Activated CD8-positive, alpha-beta T cell treated with anti-CD3 and anti-CD28 coated beads, Interleukin-2, amount 10 ng/mL, durations not matched to agents 7 days and 5 days (primary cell): ENCODE measurements at regions of chr2 and their contacts with region 1.

Region 1: GRCh38 chr2:181715033-181715630 is 34.8 kb upstream of the NEUROD1 start:
- DNase-seq: peak; percentile 85
- ATAC-seq: peak; percentile 85
- H3K4me3 Mint-ChIP-seq: no peak overlapping the region
- H3K27ac Mint-ChIP-seq: no peak overlapping the region
- H3K4me1 Mint-ChIP-seq: no peaks in the 10 kb centered on the region
- H3K27me3 Mint-ChIP-seq: peaks cover 2% of the 10 kb centered on the region

Region 2: GRCh38 chr2:181077128-181077709 is 637.9 kb before region 1 on chr2:
- CTCF ChIA-PET with region 1: interaction called, 18 read pairs
- POLR2A ChIA-PET with region 1: no interaction called
- DNase-seq: peak; percentile 55
- ATAC-seq: peak; percentile 91
- H3K4me3 Mint-ChIP-seq: no peak overlapping the region
- H3K27ac Mint-ChIP-seq: no peak overlapping the region
- H3K4me1 Mint-ChIP-seq: no peaks in the 10 kb centered on the region
- H3K27me3 Mint-ChIP-seq: peaks cover 3% of the 10 kb centered on the region

Region 3: GRCh38 chr2:181085734-181086133 is 629.4 kb before region 1 on chr2:
- CTCF ChIA-PET with region 1: interaction called, 11 read pairs
- POLR2A ChIA-PET with region 1: no interaction called
- DNase-seq: no peak
- ATAC-seq: no peak
- H3K4me3 Mint-ChIP-seq: no peak overlapping the region
- H3K27ac Mint-ChIP-seq: no peak overlapping the region
- H3K4me1 Mint-ChIP-seq: no peaks in the 10 kb centered on the region
- H3K27me3 Mint-ChIP-seq: peaks cover 3% of the 10 kb centered on the region

Region 4: GRCh38 chr2:181563101-181563692 is 151.9 kb before region 1 on chr2:
- CTCF ChIA-PET with region 1: interaction called, 13 read pairs
- POLR2A ChIA-PET with region 1: no interaction called
- DNase-seq: no peak
- ATAC-seq: no peak
- H3K4me3 Mint-ChIP-seq: no peak overlapping the region
- H3K27ac Mint-ChIP-seq: no peak overlapping the region
- H3K4me1 Mint-ChIP-seq: no peaks in the 10 kb centered on the region
- H3K27me3 Mint-ChIP-seq: no peaks in the 10 kb centered on the region

Region 5: DNA sequence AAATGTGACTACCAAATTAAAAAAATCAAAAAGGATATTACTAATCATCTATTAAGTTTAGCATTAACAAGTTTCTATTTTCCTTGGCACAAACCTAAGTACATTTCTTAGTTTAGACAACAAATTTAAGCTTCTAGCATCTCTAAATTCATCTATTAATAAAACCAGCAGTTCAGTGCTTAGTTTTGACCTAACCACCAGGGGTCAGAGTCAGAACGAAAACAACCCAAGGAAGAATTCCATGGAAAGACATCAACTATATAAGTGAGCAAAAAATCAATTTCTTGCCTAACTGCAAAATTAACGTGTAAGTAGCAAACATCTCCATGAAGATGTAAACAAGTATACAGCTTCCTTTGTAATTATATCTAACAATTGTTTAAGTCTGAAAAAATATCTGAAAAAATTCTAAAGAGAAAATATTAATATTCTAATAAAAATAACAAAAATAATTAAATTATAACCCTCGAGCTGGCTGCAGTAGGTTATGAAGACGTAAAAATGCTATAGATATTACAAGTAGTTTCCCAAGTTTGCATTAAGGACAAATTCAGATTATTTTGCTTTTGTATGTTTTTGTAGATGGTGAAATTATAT is 141.9 kb before region 1 on chr2:
- CTCF ChIA-PET with region 1: interaction called, 106 read pairs
- POLR2A ChIA-PET with region 1: no interaction called
- DNase-seq: no peak
- ATAC-seq: no peak
- H3K4me3 Mint-ChIP-seq: no peak overlapping the region
- H3K27ac Mint-ChIP-seq: no peak overlapping the region
- H3K4me1 Mint-ChIP-seq: no peaks in the 10 kb centered on the region
- H3K27me3 Mint-ChIP-seq: peaks cover 8% of the 10 kb centered on the region

Region 6: DNA sequence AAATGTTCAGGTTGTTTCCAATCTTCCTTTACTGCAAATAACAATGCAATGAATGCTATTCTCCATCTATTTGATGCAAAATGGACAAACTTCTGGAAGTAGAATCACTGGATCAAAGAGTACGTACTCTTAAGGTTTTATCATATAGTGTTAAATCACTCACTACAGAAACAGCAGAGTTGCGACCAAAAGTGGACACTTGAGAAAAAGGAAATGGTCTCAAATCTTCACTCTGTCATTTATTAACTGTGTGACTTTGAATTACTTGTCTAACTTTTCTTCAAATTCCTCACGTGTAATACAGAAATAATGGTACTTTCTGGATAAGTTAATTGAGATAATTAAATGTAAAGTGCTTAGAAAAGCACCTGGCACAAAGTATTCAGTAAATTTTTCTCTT is 136.3 kb before region 1 on chr2:
- CTCF ChIA-PET with region 1: interaction called, 106 read pairs
- POLR2A ChIA-PET with region 1: no interaction called
- DNase-seq: no peak
- ATAC-seq: no peak
- H3K4me3 Mint-ChIP-seq: no peak overlapping the region
- H3K27ac Mint-ChIP-seq: no peak overlapping the region
- H3K4me1 Mint-ChIP-seq: no peaks in the 10 kb centered on the region
- H3K27me3 Mint-ChIP-seq: peaks cover 5% of the 10 kb centered on the region

Region 7: DNA sequence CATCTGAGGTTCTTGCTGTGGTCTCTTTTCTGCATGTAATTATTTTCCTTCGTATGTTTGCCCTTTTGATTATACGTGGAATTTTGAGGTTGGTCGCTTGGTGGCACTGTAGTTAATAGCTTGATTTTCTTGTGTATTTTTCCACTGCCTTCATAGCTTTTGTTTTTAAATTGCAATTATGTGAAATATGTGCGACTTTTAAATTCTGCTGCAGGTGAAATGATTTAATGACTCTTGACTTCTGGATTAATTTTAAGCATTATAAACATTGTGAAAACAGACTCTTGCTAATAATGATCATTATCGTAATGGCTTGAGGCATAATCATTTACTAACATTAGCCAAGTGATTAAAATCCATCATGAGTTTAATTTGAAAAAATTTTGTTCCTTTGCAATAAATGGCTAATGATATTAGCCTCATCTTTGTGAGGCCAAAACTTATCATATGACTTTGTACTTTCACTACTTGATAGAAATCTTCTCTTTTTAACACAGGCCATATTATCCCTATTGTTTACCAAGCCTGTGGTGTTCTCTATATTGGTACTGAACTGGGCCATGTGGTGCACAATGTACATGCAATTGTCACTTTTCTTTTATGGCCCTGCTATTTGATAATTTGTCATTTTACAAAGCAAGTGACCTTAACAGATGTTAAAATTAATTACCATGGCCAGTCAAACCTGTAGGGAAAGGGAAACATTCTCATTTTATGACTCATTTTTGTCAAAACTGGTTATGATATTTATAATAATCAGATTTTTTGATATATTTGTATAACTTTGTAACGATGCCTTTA is 28.0 kb after region 1 on chr2:
- CTCF ChIA-PET with region 1: interaction called, 11 read pairs
- POLR2A ChIA-PET with region 1: no interaction called
- DNase-seq: peak; percentile 54
- ATAC-seq: no peak
- H3K4me3 Mint-ChIP-seq: no peak overlapping the region
- H3K27ac Mint-ChIP-seq: no peak overlapping the region
- H3K4me1 Mint-ChIP-seq: no peaks in the 10 kb centered on the region
- H3K27me3 Mint-ChIP-seq: peaks cover 12% of the 10 kb centered on the region